Heart right ventricle (tissue), 16 donors: ENCODE measurements at regions of chr2 and their contacts with region 1.

Region 1: GRCh38 chr2:191231995-191232394 is 13.2 kb upstream of the MYO1B start:
- DNase-seq: peak in 1 of 2 donors; percentile 12
- ATAC-seq: peak in 6 of 8 donors; percentile 53 to 71 (median 60)
- H3K4me3 ChIP-seq: no peak overlapping the region
- H3K27ac ChIP-seq: peak overlapping the region in 8 of 10 donors; percentile 28 to 74 (median 64)
- H3K4me1 ChIP-seq: peaks cover 0 to 41% (median 6%) of the 10 kb centered on the region in 9 donors
- H3K27me3 ChIP-seq: no peaks in the 10 kb centered on the region
- CTCF ChIP-seq: peak; percentile 3 to 68 (median 45)

Region 2: DNA sequence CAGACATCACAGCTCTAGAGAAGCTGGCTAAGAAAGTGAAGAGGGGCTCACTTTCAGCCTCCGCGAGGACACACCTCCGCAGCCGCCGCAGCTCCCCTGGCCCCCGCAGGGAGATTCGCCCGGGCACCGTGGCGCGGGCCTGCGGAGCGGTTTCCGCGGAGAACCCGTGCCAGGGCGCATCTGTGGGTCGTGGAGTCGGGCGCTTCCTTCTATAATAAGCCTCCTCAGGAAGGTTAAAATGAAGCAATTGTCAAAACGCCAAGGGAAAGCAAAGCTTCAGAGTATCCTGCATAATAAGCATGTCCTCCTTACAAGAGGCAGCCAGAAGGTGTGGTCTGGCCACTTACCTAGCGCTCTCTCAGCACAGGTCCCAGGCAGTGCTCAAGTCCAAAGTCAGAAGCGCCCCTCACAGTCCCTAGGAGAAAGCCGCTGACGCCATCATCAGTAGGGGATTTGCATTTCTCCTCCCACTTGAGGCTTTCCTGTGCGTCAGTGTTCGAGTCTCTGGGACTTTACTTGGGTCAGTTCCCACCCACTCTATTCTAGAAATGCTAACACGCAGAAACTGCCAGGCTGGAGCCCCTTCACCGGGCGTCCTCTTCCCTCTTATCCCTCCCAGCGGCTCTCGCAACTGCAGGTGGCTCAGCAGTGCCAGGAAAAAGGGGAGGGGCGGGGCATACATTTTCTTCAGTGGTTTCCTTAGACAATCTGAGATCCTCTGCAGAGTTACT is 81.2 kb before region 1 on chr2 and contains the start of gene STAT4:
- intact Hi-C with region 1: no loop called
- DNase-seq: peak; percentile 19 to 29
- ATAC-seq: peak in 7 of 8 donors; percentile 57 to 86 (median 80)
- H3K4me3 ChIP-seq: peak within 1 kb of the TSS; percentile 37 to 66 (median 53)
- H3K27ac ChIP-seq: peak within 1 kb of the TSS in 4 of 10 donors; percentile 2 to 84 (median 59)
- H3K4me1 ChIP-seq: peaks cover 0 to 24% (median 4%) of the 10 kb centered on the region in 9 donors
- H3K27me3 ChIP-seq: no peaks in the 10 kb centered on the region
- CTCF ChIP-seq: no peak
- total RNA-seq, gene STAT4: 0.52 to 9.4 (median 2.2) TPM

Region 3: DNA sequence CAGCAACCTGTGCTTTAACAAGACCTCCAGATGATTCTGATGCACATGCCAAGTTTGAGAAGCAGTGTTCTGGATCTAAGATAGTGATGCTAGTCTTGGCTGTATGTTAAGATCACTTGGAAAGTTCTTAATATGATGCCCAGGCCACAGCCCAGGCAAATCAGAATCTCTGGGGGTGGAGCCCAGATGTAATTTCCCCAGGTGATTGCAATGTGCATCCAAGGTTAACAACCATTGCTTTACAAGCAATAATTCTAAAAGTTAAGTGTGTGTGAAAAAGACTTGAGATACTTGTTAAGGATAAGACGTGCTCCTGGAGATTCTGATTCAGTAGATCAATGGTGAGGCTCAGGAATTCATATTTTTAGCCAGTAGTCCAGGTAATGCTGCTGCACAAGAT is 31.1 kb before region 1 on chr2:
- intact Hi-C with region 1: loop called in 1 of 10 experiments (anchors 2 kb)
- DNase-seq: no peak
- ATAC-seq: no peak
- H3K4me3 ChIP-seq: no peak overlapping the region
- H3K27ac ChIP-seq: no peak overlapping the region
- H3K4me1 ChIP-seq: peaks cover 0 to 32% (median 9%) of the 10 kb centered on the region in 9 donors
- H3K27me3 ChIP-seq: no peaks in the 10 kb centered on the region
- CTCF ChIP-seq: no peak

Region 4: DNA sequence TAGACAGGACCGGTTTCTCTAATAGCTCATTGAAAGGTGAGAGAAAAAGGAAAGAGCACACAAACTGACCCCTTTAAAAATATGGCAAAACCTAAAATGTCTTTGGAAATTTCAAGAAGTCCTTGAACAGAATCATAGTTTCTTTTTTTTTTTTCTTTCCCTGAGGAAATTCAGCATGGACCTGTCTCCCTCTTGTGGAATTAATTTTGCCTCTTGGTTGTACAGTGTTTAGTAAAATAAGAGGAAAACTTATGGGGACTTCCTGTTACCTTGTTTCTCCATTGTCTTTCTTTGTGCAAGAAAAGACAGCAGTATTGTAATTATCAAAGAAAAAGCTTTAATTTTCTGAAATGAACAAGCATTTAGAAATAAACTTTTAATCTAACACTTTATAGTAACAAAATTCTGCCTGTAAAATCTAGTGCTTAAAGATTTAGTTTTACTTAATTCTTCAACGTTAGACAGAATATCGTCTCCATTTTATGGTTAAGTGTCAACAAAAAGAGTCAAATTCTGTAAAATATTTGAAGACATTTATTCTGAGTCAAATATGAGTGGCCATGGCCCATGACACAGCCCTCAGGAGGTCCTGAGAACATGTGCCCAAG is 269.7 kb after region 1 on chr2:
- intact Hi-C with region 1: loop called in 5 of 10 experiments (anchors 2 to 5 kb)
- DNase-seq: no peak
- ATAC-seq: peak in 6 of 8 donors; percentile 50 to 77 (median 64)
- H3K4me3 ChIP-seq: no peak overlapping the region
- H3K27ac ChIP-seq: peak overlapping the region in 7 of 10 donors; percentile 41 to 61 (median 51)
- H3K4me1 ChIP-seq: peaks cover 0 to 26% (median 7%) of the 10 kb centered on the region in 9 donors
- H3K27me3 ChIP-seq: no peaks in the 10 kb centered on the region
- CTCF ChIP-seq: peak; percentile 42 to 83 (median 72)

Region 5: DNA sequence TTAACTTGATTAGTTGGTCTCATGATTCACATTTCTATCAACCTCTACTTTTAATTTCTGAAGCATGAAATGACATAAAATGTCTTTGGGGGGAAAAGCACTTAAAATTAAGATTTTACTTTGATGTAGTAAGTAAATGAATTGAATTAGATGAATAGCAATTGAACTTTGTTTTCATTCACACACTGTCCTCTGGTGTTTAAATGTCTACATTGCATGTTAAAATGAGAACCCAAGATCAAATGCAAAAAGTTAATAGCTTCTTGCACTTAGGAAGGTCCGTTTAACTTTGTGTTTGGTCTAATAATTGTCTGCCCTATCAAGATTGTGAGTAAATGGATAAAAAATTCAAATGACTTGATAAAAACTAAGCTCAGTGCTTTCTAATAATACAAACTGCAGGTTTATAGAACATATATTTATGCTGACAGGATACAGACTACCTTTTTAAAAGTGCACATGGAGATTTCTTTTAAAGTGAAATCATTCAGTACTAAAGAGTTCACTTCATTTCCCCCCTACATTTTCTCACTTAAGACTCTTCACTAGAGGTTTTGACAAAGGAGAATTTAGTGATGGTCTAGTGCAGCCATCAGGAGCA is 289.7 kb after region 1 on chr2:
- intact Hi-C with region 1: loop called in 1 of 10 experiments (anchors 5 kb)
- DNase-seq: no peak
- ATAC-seq: no peak
- H3K4me3 ChIP-seq: no peak overlapping the region
- H3K27ac ChIP-seq: no peak overlapping the region
- H3K4me1 ChIP-seq: no peaks in the 10 kb centered on the region
- H3K27me3 ChIP-seq: no peaks in the 10 kb centered on the region
- CTCF ChIP-seq: peak; percentile 59 to 92 (median 83)